Activated CD4-positive, alpha-beta memory T cell treated with anti-CD3 and anti-CD28 coated beads, Interleukin-2, amount 10 ng/mL, durations not matched to agents 7 days and 5 days (primary cell): ENCODE measurements at regions of chr1 and their contacts with region 1.

Region 1: DNA sequence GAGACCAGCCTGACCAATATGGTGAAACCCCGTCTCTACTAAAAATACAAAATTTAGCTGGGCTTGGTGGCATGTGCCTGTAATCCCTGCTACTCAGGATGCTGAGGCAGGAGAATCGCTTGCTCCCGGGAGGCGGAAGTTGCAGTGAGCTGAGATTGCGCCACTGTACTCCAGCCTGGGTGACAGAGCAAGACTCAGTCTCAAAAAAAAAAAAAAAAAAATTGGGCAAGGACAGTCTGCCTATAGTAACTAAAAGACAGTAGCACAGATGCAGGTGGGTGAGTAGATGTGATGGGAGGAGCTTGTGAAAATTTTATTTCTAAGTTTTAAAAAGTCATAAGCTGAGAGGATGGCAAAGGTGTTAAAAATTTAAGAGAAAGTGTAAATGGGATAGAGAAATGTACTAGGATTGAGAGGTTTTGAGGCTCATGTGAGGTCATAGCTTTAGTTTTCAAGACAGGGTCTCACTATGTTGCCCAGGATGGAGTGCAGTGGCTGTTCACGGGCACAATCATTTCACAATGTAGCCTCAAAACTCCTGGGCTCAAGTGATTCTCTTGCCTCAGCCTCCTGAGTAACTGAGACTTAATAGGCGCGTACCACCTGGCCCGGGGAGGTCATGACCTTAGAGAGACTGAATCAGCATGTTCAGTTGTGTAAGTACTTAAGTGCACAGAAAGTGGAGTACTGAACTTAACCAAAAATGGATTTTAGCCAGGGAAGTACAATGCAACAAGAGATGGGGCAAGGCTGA is 33.7 kb downstream of the PTP4A2 start:
- DNase-seq: no peak
- H3K4me3 Mint-ChIP-seq: no peak overlapping the region
- H3K27ac Mint-ChIP-seq: peak overlapping the region; percentile 3
- H3K4me1 Mint-ChIP-seq: peaks cover 16% of the 10 kb centered on the region
- H3K27me3 Mint-ChIP-seq: no peaks in the 10 kb centered on the region

Region 2: DNA sequence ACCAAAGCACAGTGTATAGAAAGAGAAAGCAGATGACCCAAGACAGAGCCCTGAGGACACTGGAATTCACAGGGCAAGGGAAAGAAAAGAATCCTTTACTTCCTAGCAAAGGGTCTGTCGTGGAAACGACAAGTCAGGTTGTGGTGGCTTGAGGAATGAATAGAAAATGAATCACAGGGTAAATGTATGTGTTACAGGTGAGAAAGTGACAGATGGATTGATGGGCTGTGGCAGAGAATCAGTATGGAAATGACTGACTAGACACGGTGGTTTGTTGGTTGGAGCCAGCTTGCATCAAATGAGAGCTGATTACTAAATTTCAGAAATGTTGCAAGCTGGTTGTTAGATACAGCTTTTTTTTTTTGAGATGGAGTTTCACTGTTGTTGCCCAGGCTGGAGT is 13.2 kb before region 1 on chr1:
- CTCF ChIA-PET with region 1: interaction called, 4 read pairs
- POLR2A ChIA-PET with region 1: interaction called, 16 read pairs
- DNase-seq: peak; percentile 55
- H3K4me3 Mint-ChIP-seq: peak overlapping the region; percentile 14
- H3K27ac Mint-ChIP-seq: peak overlapping the region; percentile 55
- H3K4me1 Mint-ChIP-seq: peaks cover 44% of the 10 kb centered on the region
- H3K27me3 Mint-ChIP-seq: no peaks in the 10 kb centered on the region